ENCODE measurements at regions of chr4 and their contacts with region 1.

Region 1: GRCh38 chr4:41360214-41360920 is 103.6 kb downstream of the UCHL1 start:
- DNase-seq: peak; percentile 64
- ATAC-seq: peak; percentile 28
- H3K4me3 Mint-ChIP-seq: peak overlapping the region; percentile 66
- H3K27ac Mint-ChIP-seq: no peak overlapping the region
- H3K4me1 Mint-ChIP-seq: peaks cover 40% of the 10 kb centered on the region
- H3K27me3 Mint-ChIP-seq: peaks cover 91% of the 10 kb centered on the region
- CTCF ChIP-seq: no peak

Region 2: GRCh38 chr4:40140196-40140595 is 1220.2 kb before region 1 on chr4:
- CTCF ChIA-PET with region 1: no interaction called
- POLR2A ChIA-PET with region 1: no interaction called
- DNase-seq: no peak
- ATAC-seq: no peak
- H3K4me3 Mint-ChIP-seq: no peak overlapping the region
- H3K27ac Mint-ChIP-seq: no peak overlapping the region; the same call in 1 of the 2 replicates
- H3K4me1 Mint-ChIP-seq: no peaks in the 10 kb centered on the region
- H3K27me3 Mint-ChIP-seq: no peaks in the 10 kb centered on the region
- CTCF ChIP-seq: no peak

Region 3: GRCh38 chr4:41221850-41222645 is 138.3 kb before region 1 on chr4:
- CTCF ChIA-PET with region 1: no interaction called
- POLR2A ChIA-PET with region 1: no interaction called
- DNase-seq: no peak
- ATAC-seq: no peak
- H3K4me3 Mint-ChIP-seq: no peak overlapping the region
- H3K27ac Mint-ChIP-seq: no peak overlapping the region
- H3K4me1 Mint-ChIP-seq: peaks cover 17% of the 10 kb centered on the region
- H3K27me3 Mint-ChIP-seq: no peaks in the 10 kb centered on the region
- CTCF ChIP-seq: no peak

Region 4: DNA sequence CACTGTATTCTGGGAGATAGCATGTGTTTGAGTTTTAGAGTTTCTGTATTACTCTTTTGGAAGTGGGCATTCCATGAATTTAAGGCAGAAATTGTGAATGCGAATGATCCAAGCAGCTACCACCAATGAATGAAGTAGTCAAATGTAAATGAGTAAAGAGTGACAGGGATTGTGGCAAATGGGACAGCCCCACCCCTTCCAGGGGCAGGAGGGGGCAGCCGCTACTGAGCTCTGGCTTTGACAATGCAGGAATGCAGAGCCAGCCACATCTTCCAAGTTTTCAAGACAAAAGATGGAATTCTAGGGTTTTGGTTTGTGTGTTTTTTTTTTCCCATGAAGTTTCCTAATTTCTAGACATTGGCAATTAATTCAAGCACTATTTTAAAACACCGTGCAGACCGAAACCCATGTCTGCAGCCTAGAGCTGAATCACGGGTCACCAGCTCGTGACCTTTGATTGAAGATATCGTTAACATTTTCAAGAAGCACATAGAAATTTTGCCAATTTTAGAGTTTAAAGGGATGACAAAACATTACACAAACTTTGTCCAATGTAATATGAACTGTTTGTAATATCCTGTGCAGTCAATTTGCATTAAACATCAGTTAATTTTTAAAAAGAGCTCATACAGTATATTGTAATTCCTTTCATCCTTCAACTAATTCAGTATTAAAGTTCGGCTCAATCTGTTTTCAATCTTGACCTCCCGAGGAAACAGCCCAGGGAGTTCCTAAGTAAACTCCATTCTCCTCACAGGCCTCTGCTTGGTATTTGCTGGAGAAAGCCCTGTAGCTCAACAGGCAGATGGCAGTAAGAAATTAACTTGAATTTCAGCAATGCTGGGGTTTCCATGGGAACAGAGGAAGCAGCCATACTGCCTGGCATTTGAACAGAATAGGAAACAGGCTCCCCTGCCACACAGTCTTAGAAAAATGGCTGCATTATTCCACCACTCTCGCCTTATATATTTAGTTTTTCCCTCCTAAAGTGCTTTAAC is 20.3 kb before region 1 on chr4:
- CTCF ChIA-PET with region 1: interaction called, 19 read pairs
- POLR2A ChIA-PET with region 1: no interaction called
- DNase-seq: peak; percentile 58
- ATAC-seq: peak; percentile 92
- H3K4me3 Mint-ChIP-seq: no peak overlapping the region
- H3K27ac Mint-ChIP-seq: peak overlapping the region; percentile 82
- H3K4me1 Mint-ChIP-seq: peaks cover 20% of the 10 kb centered on the region
- H3K27me3 Mint-ChIP-seq: no peaks in the 10 kb centered on the region
- CTCF ChIP-seq: no peak

Region 5: GRCh38 chr4:41644288-41644914 is 284.0 kb after region 1 on chr4:
- CTCF ChIA-PET with region 1: interaction called, 14 read pairs
- POLR2A ChIA-PET with region 1: no interaction called
- DNase-seq: peak; percentile 94
- ATAC-seq: peak; percentile 97
- H3K4me3 Mint-ChIP-seq: peak overlapping the region; percentile 64
- H3K27ac Mint-ChIP-seq: no peak overlapping the region
- H3K4me1 Mint-ChIP-seq: peaks cover 14% of the 10 kb centered on the region
- H3K27me3 Mint-ChIP-seq: peaks cover 25% of the 10 kb centered on the region
- CTCF ChIP-seq: peak; percentile 90

Measured in WTC11 (cell line).